H1 (cell line): ENCODE measurements at regions of chr16 and their contacts with region 1.

Region 1: DNA sequence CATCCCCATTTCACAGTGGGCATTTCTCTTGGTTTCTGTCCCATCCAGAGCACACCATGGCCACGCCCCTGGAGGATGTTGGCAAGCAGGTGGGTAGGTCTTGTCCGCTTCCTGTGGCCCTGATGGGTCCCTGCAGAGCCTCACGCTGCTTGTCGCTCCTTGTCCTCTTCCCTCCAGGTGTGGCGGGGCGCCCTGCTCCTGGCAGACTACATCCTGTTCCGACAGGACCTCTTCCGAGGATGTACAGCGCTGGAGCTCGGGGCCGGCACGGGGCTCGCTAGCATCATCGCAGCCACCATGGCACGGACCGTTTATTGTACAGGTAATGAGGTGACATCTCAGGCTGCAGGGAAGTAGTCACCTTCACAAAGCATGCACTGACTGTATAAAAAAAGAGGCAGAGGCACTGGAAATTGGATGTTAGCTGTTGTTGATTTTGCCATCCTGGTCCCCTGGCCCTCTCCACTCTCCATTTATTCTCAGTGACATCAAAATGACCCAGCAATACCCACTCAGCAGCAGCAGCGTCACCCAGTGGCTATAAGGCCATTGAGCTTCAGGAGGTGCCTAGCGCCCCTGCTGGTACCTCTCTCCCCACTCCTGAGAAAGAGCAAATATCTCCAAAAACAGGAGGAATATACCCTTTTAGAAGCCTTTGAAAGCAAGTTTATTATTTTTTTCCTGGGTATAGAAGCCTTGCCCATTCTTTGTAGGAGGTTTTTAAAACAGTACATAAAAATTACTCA is 13.7 kb downstream of the METTL22 start:
- DNase-seq: peak; percentile 43 to 68
- H3K4me3 ChIP-seq: no peak overlapping the region
- H3K27ac ChIP-seq: no peak overlapping the region
- H3K4me1 ChIP-seq: no peaks in the 10 kb centered on the region
- H3K27me3 ChIP-seq: no peaks in the 10 kb centered on the region
- CTCF ChIP-seq: peak; percentile 98 to 100 (median 99)
- EP300 ChIP-seq: no peak
- POLR2A ChIP-seq: no peak
- RAD21 ChIP-seq: peak; percentile 89 to 90

Region 2: DNA sequence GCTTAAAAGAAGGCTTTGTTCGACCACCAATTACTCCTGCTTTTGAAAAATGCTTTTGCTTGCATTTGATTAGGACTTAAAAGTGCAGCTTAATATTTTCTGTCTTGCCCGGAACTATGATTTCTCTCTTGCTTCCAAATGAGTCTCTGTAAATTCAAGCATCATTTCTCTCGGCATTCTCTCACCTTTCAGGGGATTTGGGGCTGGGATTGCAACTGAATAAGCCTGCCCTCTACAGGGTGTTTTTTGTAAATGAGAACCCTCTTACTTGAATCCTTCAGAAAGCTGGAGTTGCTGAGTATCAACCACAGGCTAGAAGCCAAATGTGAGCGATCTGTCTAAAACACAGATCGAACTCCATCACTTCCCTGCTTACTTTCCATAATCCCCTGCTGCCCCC is 279.5 kb before region 1 on chr16:
- CTCF ChIA-PET with region 1: no interaction called
- POLR2A ChIA-PET with region 1: no interaction called
- DNase-seq: no peak
- H3K4me3 ChIP-seq: no peak overlapping the region
- H3K27ac ChIP-seq: no peak overlapping the region
- H3K4me1 ChIP-seq: no peaks in the 10 kb centered on the region
- H3K27me3 ChIP-seq: no peaks in the 10 kb centered on the region
- CTCF ChIP-seq: peak in 2 of 3 experiments; percentile 53 to 56; a peak in 2 of 4 replicates
- EP300 ChIP-seq: no peak
- POLR2A ChIP-seq: no peak
- RAD21 ChIP-seq: peak; percentile 66 to 75

Region 3: DNA sequence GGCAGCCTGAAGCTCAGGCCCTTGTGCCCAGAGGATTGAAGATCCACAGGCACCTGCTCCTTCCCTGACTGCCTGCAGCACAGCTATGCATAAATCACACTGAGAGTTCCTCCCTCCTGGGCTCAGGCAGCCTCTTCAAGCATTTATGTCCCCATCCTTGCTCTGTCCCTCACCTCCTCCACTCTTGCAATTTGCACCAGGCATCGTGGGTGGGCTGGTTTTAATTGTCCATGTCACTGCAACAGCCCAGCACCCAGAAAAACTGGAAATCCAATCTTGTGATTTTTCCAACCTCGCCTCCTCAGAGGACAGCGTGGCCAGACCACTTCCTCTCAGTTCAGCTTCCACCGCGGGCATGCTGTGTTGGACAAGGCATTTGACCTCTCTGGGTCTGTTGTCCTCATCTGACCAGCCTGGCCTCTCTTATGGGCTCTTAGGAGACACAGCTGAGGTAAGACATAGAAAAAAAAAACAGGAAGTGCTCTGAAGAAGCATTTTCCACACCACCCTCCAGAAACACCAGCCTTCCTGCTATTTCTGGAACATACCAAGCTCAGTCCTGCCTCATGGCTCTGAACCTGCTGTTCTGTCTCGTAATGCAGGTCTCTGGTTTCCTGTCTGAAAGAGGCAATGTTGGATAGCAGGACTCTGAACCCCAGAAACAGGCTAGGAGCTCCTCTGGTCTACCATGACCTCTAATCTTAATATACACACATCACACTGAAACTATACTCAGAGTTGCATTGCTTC is 53.2 kb before region 1 on chr16:
- CTCF ChIA-PET with region 1: interaction called, 416 read pairs
- POLR2A ChIA-PET with region 1: interaction called, 4 read pairs
- DNase-seq: no peak
- H3K4me3 ChIP-seq: no peak overlapping the region
- H3K27ac ChIP-seq: no peak overlapping the region
- H3K4me1 ChIP-seq: peaks cover 0 to 3% (median 0%) of the 10 kb centered on the region in 4 experiments; a peak in 2 of 7 replicates
- H3K27me3 ChIP-seq: no peaks in the 10 kb centered on the region; a peak in 1 of 7 replicates
- CTCF ChIP-seq: no peak
- EP300 ChIP-seq: no peak
- POLR2A ChIP-seq: no peak
- RAD21 ChIP-seq: no peak

Region 4: DNA sequence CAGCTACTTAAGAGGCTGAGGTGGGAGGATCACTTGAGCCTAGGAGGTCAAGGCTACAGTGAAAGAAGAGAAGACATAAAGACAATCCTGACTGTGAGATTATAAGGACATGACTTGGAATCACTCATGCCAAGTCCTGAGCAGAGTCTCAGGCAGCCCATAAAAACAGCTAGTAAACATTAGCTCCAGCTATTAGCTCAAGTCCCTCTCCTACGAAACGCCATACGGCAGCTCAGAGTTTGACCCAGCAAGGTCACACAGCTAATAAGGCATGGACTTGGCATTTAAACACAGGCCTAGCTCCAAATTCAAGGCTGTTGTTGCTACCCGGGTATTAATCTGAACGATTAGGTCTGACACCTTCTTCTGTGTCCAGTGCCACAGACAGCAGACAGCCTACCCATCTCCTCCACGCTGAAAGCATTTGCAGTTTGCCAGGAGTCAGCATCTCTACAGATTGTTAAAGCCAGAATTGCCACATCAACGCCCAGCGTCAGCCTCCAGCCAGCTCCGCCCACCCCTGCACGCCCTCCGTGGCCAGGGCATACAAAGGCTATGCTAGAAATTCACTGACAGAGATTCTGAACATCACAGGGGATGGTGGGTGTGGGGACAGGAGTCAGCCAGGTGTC is 34.9 kb before region 1 on chr16:
- CTCF ChIA-PET with region 1: interaction called, 15 read pairs
- POLR2A ChIA-PET with region 1: no interaction called
- DNase-seq: no peak
- H3K4me3 ChIP-seq: no peak overlapping the region
- H3K27ac ChIP-seq: no peak overlapping the region
- H3K4me1 ChIP-seq: peaks cover 0 to 3% (median 0%) of the 10 kb centered on the region in 4 experiments; a peak in 2 of 7 replicates
- H3K27me3 ChIP-seq: no peaks in the 10 kb centered on the region
- CTCF ChIP-seq: no peak
- EP300 ChIP-seq: no peak
- POLR2A ChIP-seq: no peak
- RAD21 ChIP-seq: no peak

Region 5: DNA sequence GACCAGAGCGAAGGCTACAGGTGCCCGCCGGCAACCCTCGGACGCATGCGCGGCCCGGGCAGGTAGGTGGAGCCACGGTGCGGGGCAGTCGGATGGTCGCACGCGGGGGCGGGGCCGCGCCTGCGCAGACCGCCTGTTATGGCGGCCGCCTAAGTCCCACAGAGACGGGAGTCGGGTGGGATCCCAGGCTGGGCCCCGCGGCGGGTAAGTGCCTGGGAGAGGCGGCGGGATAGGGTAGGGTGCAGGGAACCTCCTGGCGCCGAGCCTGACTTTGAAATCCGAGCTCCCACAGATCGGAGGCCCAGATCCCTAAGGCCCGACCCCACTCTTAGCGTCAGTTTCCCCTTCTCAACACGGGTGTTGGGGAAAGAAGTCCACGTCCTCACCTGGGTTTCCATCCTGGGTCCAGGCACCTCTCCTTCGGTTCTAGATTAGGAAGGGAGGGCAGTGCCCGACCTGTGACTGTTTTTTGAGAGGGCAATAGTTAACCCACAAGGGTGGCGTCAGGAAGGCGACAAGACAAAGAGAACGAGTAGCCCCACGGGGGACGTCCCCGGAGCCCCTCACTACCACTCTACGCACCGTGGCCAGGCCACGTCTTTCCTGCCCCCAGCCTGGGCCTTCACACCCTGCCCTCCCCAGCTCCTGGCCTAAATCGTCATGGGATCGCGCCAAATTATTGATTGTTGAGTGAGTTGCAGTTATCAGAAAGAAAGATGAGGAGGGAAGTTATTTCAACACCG is 13.4 kb before region 1 on chr16 and contains the start of gene METTL22:
- CTCF ChIA-PET with region 1: interaction called, 81 read pairs
- POLR2A ChIA-PET with region 1: interaction called, 23 read pairs
- DNase-seq: peak; percentile 65 to 95
- H3K4me3 ChIP-seq: peak within 1 kb of the TSS; percentile 74 to 94 (median 87)
- H3K27ac ChIP-seq: peak within 1 kb of the TSS; percentile 94
- H3K4me1 ChIP-seq: no peaks in the 10 kb centered on the region; a peak in 1 of 7 replicates
- H3K27me3 ChIP-seq: no peaks in the 10 kb centered on the region
- CTCF ChIP-seq: no peak
- EP300 ChIP-seq: no peak
- POLR2A ChIP-seq: peak; percentile 65 to 94
- RAD21 ChIP-seq: no peak
- total RNA-seq, gene METTL22: 56.0 and 56.7 TPM in 2 replicates

Region 6: GRCh38 chr16:8660841-8661301 is 25.7 kb after region 1 on chr16:
- CTCF ChIA-PET with region 1: interaction called, 24 read pairs
- POLR2A ChIA-PET with region 1: interaction called, 3 read pairs
- DNase-seq: peak; percentile 67 to 87
- H3K4me3 ChIP-seq: no peak overlapping the region
- H3K27ac ChIP-seq: no peak overlapping the region
- H3K4me1 ChIP-seq: peaks cover 0 to 3% (median 0%) of the 10 kb centered on the region in 4 experiments; a peak in 2 of 7 replicates
- H3K27me3 ChIP-seq: no peaks in the 10 kb centered on the region
- CTCF ChIP-seq: peak; percentile 94 to 96 (median 95)
- EP300 ChIP-seq: no peak
- POLR2A ChIP-seq: no peak
- RAD21 ChIP-seq: peak; percentile 99 to 100

Region 7: GRCh38 chr16:8682566-8683259 is 47.5 kb after region 1 on chr16:
- CTCF ChIA-PET with region 1: no interaction called
- POLR2A ChIA-PET with region 1: no interaction called
- DNase-seq: no peak
- H3K4me3 ChIP-seq: no peak overlapping the region
- H3K27ac ChIP-seq: no peak overlapping the region
- H3K4me1 ChIP-seq: peaks cover 0 to 4% (median 3%) of the 10 kb centered on the region in 4 experiments; a peak in 4 of 7 replicates
- H3K27me3 ChIP-seq: no peaks in the 10 kb centered on the region
- CTCF ChIP-seq: no peak
- EP300 ChIP-seq: no peak
- POLR2A ChIP-seq: no peak
- RAD21 ChIP-seq: no peak